Dendritic cell treated with granulocyte-macrophage colony-stimulating factor and Interleukin-4, amounts not matched to agents 40 ng/mL and 50 ng/mL, for 4 days (primary cell): ENCODE measurements at regions of chr3 and their contacts with region 1.

Region 1: DNA sequence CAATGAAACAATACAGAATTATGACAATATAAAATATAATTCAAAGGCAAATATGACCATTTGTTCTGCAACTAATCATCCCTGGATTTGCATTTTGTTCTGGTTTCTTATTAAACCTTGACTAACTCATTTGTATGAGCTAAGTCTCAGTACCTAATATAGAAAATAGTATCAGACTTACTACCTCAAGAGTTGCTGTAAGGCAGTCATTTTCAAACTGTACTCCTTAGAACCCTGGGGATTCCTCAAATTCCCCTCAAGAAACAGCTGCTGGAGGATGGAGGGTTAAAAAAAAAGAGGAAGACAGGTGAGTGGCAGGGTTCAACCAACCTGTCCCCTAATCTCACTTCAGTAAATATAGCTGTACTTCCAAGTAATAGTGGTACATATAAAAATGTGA is 11.1 kb downstream of the ZBTB11 start:
- H3K4me3 Mint-ChIP-seq: no peak overlapping the region
- H3K27ac Mint-ChIP-seq: no peak overlapping the region
- H3K4me1 Mint-ChIP-seq: no peaks in the 10 kb centered on the region
- H3K27me3 Mint-ChIP-seq: no peaks in the 10 kb centered on the region

Region 2: GRCh38 chr3:101351829-101352228 is 314.0 kb before region 1 on chr3:
- intact Hi-C with region 1: no loop called
- H3K4me3 Mint-ChIP-seq: no peak overlapping the region
- H3K27ac Mint-ChIP-seq: no peak overlapping the region
- H3K4me1 Mint-ChIP-seq: no peaks in the 10 kb centered on the region
- H3K27me3 Mint-ChIP-seq: no peaks in the 10 kb centered on the region

Region 3: DNA sequence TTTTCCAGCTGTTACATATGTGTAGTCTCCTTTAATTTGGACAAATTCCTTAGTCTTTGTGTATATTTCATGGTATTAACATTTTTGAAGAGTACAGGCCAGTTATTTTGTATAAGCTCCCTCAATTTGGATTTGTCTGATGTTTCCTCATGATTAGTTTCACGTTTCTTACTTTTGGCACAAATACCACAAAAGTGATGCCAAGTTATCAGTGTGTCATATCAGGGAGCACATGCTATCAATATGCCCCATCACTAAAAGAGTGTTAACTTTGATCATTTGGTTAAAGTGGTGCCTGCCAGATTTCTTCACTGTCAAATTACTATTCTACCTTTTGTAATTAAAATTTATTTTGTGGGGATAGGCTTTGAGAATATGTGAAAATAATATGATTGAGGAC is 77.2 kb before region 1 on chr3:
- intact Hi-C with region 1: loop called (anchors 5 kb)
- H3K4me3 Mint-ChIP-seq: no peak overlapping the region
- H3K27ac Mint-ChIP-seq: no peak overlapping the region
- H3K4me1 Mint-ChIP-seq: no peaks in the 10 kb centered on the region
- H3K27me3 Mint-ChIP-seq: no peaks in the 10 kb centered on the region